ENCODE measurements at regions of chr18 and their contacts with region 1.

Region 1: DNA sequence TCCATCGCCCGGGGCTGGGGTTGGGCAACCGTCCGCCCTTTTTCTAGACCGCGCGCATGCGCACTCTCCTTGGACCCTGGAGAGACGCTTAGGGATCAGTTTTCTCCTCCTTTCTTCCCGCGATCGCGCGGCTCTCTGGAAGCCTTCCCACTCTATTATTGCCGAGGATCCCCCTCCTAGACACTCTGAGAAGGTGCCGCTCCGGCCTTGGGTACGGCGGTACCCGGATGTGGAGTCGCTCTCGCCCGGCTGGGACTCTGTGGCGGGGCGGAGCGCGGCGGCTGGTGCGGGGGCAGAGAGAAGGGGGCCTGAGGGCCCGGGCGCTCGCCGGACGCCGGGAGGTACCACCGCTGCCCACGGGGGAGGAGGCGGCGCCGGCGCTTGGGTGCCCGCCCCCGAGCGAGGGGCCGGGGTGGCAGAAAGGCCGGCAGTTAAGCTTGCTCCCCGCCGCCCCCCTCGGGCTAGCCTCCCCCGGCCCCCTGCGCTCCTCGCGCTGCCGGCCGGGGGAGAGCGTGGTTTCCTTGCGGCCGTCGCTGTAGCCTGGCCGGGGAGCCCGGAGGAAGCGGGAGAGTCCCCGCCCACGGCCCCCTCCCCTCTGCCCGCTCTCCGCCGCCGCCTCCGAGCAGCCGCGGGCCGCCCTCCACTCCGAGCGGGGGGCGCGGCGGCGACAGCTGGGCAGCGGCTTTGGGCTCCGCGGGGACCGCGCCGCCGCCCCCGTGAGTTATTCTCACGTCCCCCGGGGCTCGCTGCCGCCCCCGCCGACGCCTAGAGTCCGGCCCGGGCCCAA is at the start of gene MIB1:
- DNase-seq: no peak
- H3K4me3 Mint-ChIP-seq: peak within 1 kb of the TSS; percentile 92
- H3K27ac Mint-ChIP-seq: peak within 1 kb of the TSS; percentile 93
- H3K4me1 Mint-ChIP-seq: peaks cover 53% of the 10 kb centered on the region
- H3K27me3 Mint-ChIP-seq: peaks cover 5% of the 10 kb centered on the region
- total RNA-seq, gene MIB1: 57.8 to 58.3 TPM

Region 2: DNA sequence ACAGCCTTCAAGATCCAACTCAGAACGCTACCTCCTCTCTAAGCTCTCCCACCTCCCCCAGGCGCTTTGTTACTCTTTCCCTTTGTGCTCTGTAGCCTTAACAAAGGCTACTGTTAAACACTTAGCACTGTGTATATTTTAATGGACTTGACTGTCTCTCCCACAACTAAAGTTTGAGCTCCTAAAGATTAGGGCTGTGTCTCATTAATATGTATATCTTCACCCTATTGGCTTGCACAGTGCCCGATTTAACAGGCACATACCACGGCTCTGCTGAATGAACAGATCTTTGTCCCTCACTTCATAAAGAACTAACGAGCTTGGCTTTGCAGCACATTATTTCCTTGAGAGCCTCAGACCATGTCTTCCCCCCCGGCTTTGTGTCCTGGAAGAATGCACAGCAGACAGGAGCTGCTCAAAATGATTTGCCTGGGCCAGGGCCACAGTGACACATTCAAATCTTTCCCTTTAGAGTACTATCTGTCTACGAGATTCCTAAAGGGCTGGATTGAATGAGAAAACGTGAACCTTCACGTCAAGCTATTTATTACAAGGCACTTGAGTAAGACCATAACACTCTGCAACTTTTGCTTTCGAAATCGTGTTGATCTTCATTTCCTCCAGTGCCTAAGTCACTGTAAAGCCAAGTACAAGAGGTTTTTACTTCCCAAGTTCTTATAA is 58.4 kb before region 1 on chr18:
- CTCF ChIA-PET with region 1: interaction called, 5 read pairs
- POLR2A ChIA-PET with region 1: interaction called, 10 read pairs
- DNase-seq: peak; percentile 28
- H3K4me3 Mint-ChIP-seq: no peak overlapping the region
- H3K27ac Mint-ChIP-seq: no peak overlapping the region
- H3K4me1 Mint-ChIP-seq: peaks cover 15% of the 10 kb centered on the region
- H3K27me3 Mint-ChIP-seq: no peaks in the 10 kb centered on the region

Region 3: DNA sequence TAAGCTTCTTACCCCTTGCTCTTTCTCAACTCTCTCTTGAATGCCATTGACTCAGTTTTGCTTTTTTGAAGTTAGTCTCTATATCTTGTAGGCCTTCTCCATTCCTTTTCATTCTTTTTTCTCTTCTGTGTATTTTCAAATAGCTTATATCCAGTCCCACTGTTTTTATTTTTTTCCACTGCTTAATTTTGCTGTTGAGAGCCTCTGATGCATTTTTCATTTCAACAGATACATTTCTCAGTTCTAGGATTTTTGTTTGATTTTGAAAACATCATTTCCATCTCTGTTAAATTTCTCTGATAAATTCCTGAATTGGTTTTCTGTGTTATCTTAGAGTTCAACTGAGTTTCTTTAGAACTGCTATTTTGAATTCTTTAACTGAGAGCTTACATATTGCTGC is 45.6 kb after region 1 on chr18:
- CTCF ChIA-PET with region 1: no interaction called
- POLR2A ChIA-PET with region 1: no interaction called
- DNase-seq: no peak
- H3K4me3 Mint-ChIP-seq: no peak overlapping the region
- H3K27ac Mint-ChIP-seq: no peak overlapping the region
- H3K4me1 Mint-ChIP-seq: no peaks in the 10 kb centered on the region
- H3K27me3 Mint-ChIP-seq: no peaks in the 10 kb centered on the region

Measured in activated CD4-positive, alpha-beta memory T cell treated with anti-CD3 and anti-CD28 coated beads, Interleukin-2, amount 10 ng/mL, durations not matched to agents 7 days and 5 days (primary cell).